GM12878 (cell line): ENCODE measurements at regions of chr2 and their contacts with region 1.

Region 1: GRCh38 chr2:191051825-191052778 is 38.1 kb upstream of the STAT1 start:
- DNase-seq: peak; percentile 12
- ATAC-seq: peak; percentile 66
- H3K4me3 ChIP-seq: no peak overlapping the region
- H3K27ac ChIP-seq: no peak overlapping the region
- H3K4me1 ChIP-seq: peaks cover 6% of the 10 kb centered on the region
- H3K27me3 ChIP-seq: no peaks in the 10 kb centered on the region
- CTCF ChIP-seq: peak; percentile 48 to 69 (median 60)
- EP300 ChIP-seq: no peak
- POLR2A ChIP-seq: no peak
- RAD21 ChIP-seq: peak; percentile 86

Region 2: GRCh38 chr2:190853531-190854383 is 198.3 kb before region 1 on chr2:
- CTCF ChIA-PET with region 1: interaction called, 11 read pairs
- POLR2A ChIA-PET with region 1: no interaction called
- RAD21 ChIA-PET with region 1: interaction called, 6 read pairs
- SMC1A ChIA-PET with region 1: interaction called, 6 read pairs
- in situ Hi-C with region 1: no loop called
- intact Hi-C with region 1: no loop called
- DNase-seq: no peak
- ATAC-seq: peak; percentile 74
- H3K4me3 ChIP-seq: no peak overlapping the region
- H3K27ac ChIP-seq: no peak overlapping the region
- H3K4me1 ChIP-seq: no peaks in the 10 kb centered on the region
- H3K27me3 ChIP-seq: no peaks in the 10 kb centered on the region
- CTCF ChIP-seq: no peak
- EP300 ChIP-seq: no peak
- POLR2A ChIP-seq: no peak
- RAD21 ChIP-seq: no peak

Region 3: DNA sequence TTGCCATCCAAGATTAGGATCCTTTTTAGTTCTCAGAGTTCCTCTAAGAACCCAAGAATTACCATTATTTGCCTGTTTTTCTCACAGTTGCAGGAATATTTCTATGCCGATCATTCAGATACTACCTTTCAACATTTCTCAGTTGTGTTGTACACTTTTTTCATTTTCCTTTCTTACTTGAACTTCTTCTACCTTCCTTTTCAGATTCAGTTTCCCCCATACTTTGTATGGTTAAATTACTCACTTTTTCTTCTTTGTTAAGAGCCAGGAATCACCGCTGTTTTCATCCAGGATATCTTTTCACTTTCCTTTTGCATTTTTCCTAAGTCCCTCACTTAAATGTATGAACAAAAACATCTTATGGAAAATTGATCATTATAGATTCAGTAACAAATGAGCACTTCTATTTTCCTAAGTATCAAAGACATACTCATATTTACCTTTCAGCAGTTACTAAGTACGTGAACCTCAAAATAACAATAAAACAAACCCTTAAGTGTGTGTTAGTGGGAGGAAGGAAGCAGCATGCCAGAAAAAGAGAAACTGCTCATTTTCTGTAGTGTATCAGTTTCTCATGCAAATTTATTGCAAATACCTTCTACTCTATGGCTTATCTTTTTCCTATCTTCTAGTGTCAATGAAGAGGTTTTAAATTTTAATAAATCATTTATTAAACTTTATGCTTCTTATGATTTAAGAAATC is 26.2 kb after region 1 on chr2:
- CTCF ChIA-PET with region 1: interaction called, 3 read pairs
- POLR2A ChIA-PET with region 1: no interaction called
- RAD21 ChIA-PET with region 1: no interaction called
- SMC1A ChIA-PET with region 1: interaction called, 12 read pairs
- in situ Hi-C with region 1: no loop called
- intact Hi-C with region 1: no loop called
- DNase-seq: no peak
- ATAC-seq: peak; percentile 79
- H3K4me3 ChIP-seq: no peak overlapping the region
- H3K27ac ChIP-seq: no peak overlapping the region
- H3K4me1 ChIP-seq: no peaks in the 10 kb centered on the region
- H3K27me3 ChIP-seq: no peaks in the 10 kb centered on the region
- CTCF ChIP-seq: no peak
- EP300 ChIP-seq: no peak
- POLR2A ChIP-seq: no peak
- RAD21 ChIP-seq: no peak

Region 4: DNA sequence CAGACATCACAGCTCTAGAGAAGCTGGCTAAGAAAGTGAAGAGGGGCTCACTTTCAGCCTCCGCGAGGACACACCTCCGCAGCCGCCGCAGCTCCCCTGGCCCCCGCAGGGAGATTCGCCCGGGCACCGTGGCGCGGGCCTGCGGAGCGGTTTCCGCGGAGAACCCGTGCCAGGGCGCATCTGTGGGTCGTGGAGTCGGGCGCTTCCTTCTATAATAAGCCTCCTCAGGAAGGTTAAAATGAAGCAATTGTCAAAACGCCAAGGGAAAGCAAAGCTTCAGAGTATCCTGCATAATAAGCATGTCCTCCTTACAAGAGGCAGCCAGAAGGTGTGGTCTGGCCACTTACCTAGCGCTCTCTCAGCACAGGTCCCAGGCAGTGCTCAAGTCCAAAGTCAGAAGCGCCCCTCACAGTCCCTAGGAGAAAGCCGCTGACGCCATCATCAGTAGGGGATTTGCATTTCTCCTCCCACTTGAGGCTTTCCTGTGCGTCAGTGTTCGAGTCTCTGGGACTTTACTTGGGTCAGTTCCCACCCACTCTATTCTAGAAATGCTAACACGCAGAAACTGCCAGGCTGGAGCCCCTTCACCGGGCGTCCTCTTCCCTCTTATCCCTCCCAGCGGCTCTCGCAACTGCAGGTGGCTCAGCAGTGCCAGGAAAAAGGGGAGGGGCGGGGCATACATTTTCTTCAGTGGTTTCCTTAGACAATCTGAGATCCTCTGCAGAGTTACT is 98.7 kb after region 1 on chr2 and contains the start of gene STAT4:
- CTCF ChIA-PET with region 1: interaction called, 659 read pairs
- POLR2A ChIA-PET with region 1: interaction called, 13 read pairs
- RAD21 ChIA-PET with region 1: interaction called, 324 read pairs
- SMC1A ChIA-PET with region 1: interaction called, 393 read pairs
- in situ Hi-C with region 1: loop called (anchors 5 kb)
- intact Hi-C with region 1: loop called (anchors 1 kb)
- DNase-seq: peak; percentile 45
- ATAC-seq: peak; percentile 89
- H3K4me3 ChIP-seq: peak within 1 kb of the TSS; percentile 78
- H3K27ac ChIP-seq: no peak within 1 kb of the TSS
- H3K4me1 ChIP-seq: peaks cover 7% of the 10 kb centered on the region
- H3K27me3 ChIP-seq: peaks cover 0 to 3% of the 10 kb centered on the region in 2 experiments; a peak in 1 of 4 replicates
- CTCF ChIP-seq: no peak; a peak in 1 of 6 replicates
- EP300 ChIP-seq: peak; percentile 84 to 89; a peak in 3 of 4 replicates
- POLR2A ChIP-seq: peak; percentile 62
- RAD21 ChIP-seq: peak; percentile 28; the same call in 1 of the 2 replicates
- polyA plus RNA-seq, gene STAT4: 3.1 to 4.4 TPM

Region 5: DNA sequence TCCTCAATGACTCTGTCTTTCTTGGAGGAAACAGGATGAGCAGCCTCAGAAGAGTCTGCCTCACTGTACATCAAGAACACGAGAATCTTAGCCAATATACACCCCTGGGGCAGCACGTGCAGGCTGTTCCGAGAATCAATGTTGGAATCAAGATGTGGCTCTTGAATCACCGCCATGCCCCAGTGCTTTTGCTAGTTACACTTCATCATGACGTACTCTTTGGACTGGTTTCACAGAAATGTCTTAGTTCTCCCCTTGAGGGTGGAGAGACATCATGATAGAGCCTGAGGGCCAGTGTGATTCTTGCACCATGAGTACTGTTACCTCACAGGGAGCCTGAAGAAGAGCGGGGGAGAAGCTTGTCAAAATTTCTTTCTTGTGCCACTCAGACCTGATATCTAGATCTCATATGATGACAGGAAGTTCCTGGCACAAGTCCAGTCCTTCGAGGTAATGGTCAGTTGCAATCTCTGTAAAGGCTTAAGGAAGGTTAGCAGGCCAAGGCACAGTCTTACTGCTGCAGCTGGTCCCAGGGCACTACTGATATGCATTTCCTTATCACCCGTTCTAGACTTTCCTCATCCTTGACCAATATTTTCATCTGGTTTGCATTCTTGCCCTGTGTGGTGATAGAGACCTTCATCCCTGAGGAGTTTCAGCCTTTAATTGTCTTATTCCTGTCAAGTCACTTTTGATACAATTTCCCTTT is 126.9 kb after region 1 on chr2:
- CTCF ChIA-PET with region 1: interaction called, 11 read pairs
- POLR2A ChIA-PET with region 1: no interaction called
- RAD21 ChIA-PET with region 1: interaction called, 5 read pairs
- SMC1A ChIA-PET with region 1: interaction called, 9 read pairs
- in situ Hi-C with region 1: no loop called
- intact Hi-C with region 1: no loop called
- DNase-seq: no peak
- ATAC-seq: no peak; the same call in 2 of the 3 replicates
- H3K4me3 ChIP-seq: no peak overlapping the region
- H3K27ac ChIP-seq: no peak overlapping the region
- H3K4me1 ChIP-seq: peaks cover 14% of the 10 kb centered on the region; the same call in 1 of the 2 replicates
- H3K27me3 ChIP-seq: peaks cover 0 to 2% of the 10 kb centered on the region in 2 experiments; a peak in 1 of 4 replicates
- CTCF ChIP-seq: no peak
- EP300 ChIP-seq: no peak
- POLR2A ChIP-seq: no peak
- RAD21 ChIP-seq: no peak

Region 6: GRCh38 chr2:191521608-191522208 is 469.6 kb after region 1 on chr2:
- CTCF ChIA-PET with region 1: interaction called, 20 read pairs
- POLR2A ChIA-PET with region 1: interaction called, 3 read pairs
- RAD21 ChIA-PET with region 1: interaction called, 6 read pairs
- SMC1A ChIA-PET with region 1: interaction called, 11 read pairs
- in situ Hi-C with region 1: loop called (anchors 10 kb)
- intact Hi-C with region 1: loop called (anchors 2 kb)
- DNase-seq: no peak
- ATAC-seq: 0 out of 3 replicates have a peak, but pooled peaks have one; percentile 31
- H3K4me3 ChIP-seq: no peak overlapping the region
- H3K27ac ChIP-seq: no peak overlapping the region
- H3K4me1 ChIP-seq: no peaks in the 10 kb centered on the region
- H3K27me3 ChIP-seq: no peaks in the 10 kb centered on the region; a peak in 2 of 4 replicates
- CTCF ChIP-seq: peak; percentile 51 to 66 (median 61)
- EP300 ChIP-seq: no peak
- POLR2A ChIP-seq: no peak
- RAD21 ChIP-seq: peak; percentile 69